ENCODE measurements at regions of chr6 and their contacts with region 1.

Region 1: DNA sequence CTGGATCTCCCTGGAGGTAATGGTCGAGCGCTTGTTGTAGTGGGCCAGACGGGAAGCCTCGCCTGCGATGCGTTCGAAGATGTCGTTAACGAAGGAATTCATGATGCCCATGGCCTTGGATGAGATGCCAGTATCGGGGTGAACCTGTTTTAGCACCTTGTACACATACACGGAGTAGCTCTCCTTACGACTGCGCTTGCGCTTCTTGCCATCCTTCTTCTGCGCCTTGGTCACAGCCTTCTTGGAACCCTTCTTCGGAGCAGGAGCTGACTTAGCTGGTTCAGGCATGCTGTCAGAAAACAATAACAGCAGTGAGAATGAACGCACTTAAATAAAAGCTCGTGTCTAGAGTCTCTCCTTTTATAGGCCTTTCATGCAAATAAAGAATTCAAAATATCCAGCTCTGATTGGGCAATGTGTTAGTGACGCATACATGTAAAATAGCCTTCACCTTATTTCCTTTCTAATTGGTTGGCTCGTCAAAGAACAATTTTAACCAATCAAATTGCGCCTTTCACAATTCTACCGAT is 129.2 kb downstream of the HFE start:
- DNase-seq: peak; percentile 98
- H3K4me3 ChIP-seq: peak overlapping the region; percentile 62
- H3K27ac ChIP-seq: peak overlapping the region; percentile 92
- H3K4me1 ChIP-seq: peaks cover 3% of the 10 kb centered on the region
- H3K27me3 ChIP-seq: no peaks in the 10 kb centered on the region
- CTCF ChIP-seq: no peak

Region 2: DNA sequence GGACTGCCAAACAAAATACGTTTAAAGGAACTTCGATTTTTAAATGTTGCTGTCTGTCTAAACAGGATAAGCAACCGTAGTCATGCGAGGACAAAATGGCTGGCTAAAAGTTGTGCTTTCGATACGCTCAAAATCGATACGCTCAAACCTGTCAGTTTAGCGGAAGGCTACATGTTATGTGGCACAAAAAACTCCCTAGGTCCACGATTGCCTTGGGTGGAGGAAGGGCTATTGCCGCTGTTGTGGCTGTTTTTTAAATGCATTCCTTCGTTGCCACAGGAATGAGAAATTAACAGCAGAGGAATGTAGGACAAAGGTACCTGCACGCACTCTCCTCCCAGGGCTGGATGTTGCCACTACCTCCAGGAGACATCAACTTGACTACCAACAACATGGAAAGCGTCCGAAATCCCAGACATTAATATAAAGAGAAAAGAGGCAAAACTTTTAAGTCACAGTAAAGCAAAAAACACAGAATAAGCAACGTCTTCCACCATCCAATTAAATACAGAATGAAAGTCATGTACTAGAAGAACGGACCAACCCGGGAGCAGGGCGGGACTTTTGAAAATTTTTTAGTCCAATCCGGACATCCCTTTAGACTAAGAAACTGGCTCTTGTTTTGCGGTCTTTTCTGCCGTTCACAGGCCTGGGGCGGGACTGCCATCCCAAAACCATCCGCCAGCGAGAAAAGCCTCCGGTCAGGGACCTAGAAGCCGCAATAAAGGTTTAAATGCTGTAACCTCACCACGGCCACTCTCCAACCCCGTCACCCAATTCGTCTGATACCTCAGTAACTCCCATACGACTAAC is 161.4 kb before region 1 on chr6:
- CTCF ChIA-PET with region 1: no interaction called
- POLR2A ChIA-PET with region 1: no interaction called
- intact Hi-C with region 1: loop called (anchors 5 kb)
- DNase-seq: peak; percentile 96
- H3K4me3 ChIP-seq: peak overlapping the region; percentile 78
- H3K27ac ChIP-seq: peak overlapping the region; percentile 96
- H3K4me1 ChIP-seq: peaks cover 20% of the 10 kb centered on the region
- H3K27me3 ChIP-seq: no peaks in the 10 kb centered on the region
- CTCF ChIP-seq: no peak

Region 3: GRCh38 chr6:26115226-26115625 is 101.2 kb before region 1 on chr6:
- CTCF ChIA-PET with region 1: no interaction called
- POLR2A ChIA-PET with region 1: no interaction called
- intact Hi-C with region 1: no loop called
- DNase-seq: no peak
- H3K4me3 ChIP-seq: no peak overlapping the region
- H3K27ac ChIP-seq: peak overlapping the region; percentile 17
- H3K4me1 ChIP-seq: peaks cover 12% of the 10 kb centered on the region
- H3K27me3 ChIP-seq: no peaks in the 10 kb centered on the region
- CTCF ChIP-seq: no peak

Region 4: DNA sequence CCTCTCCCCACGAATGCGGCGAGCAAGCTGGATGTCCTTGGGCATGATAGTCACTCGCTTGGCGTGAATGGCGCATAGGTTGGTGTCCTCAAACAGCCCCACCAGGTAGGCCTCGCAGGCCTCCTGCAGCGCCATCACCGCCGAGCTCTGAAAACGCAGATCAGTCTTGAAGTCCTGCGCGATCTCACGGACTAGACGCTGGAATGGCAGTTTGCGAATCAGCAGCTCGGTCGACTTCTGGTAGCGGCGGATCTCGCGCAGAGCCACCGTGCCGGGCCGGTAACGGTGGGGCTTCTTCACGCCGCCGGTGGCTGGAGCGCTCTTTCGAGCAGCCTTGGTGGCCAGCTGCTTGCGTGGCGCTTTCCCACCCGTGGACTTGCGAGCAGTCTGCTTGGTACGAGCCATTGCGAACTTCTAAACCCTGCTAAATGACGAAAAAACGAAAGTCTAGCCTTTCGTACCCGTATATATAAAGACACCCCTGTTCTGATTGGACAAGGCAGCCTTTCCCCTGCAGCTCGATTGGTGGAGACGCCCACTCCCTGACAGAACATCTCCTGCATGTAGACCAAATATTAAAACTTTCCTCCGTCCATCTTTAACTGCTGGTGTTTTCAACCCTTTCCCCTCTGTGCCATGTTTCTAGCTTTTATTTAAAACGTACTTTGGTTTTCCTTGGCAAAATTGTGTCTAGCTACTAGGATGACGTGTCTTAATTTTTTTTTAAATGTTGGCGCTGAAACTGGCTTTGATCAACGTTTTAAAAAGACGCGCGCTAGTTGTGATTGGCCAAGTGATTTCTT is 19.4 kb before region 1 on chr6:
- CTCF ChIA-PET with region 1: interaction called, 9 read pairs
- POLR2A ChIA-PET with region 1: interaction called, 85 read pairs
- intact Hi-C with region 1: no loop called
- DNase-seq: peak; percentile 96
- H3K4me3 ChIP-seq: peak overlapping the region; percentile 63
- H3K27ac ChIP-seq: peak overlapping the region; percentile 87
- H3K4me1 ChIP-seq: no peaks in the 10 kb centered on the region
- H3K27me3 ChIP-seq: no peaks in the 10 kb centered on the region
- CTCF ChIP-seq: no peak

Region 5: GRCh38 chr6:26234421-26235296 is 18.2 kb after region 1 on chr6:
- CTCF ChIA-PET with region 1: no interaction called
- POLR2A ChIA-PET with region 1: interaction called, 15 read pairs
- intact Hi-C with region 1: no loop called
- DNase-seq: peak; percentile 93
- H3K4me3 ChIP-seq: peak overlapping the region; percentile 54
- H3K27ac ChIP-seq: peak overlapping the region; percentile 90
- H3K4me1 ChIP-seq: peaks cover 24% of the 10 kb centered on the region
- H3K27me3 ChIP-seq: no peaks in the 10 kb centered on the region
- CTCF ChIP-seq: no peak

Region 6: DNA sequence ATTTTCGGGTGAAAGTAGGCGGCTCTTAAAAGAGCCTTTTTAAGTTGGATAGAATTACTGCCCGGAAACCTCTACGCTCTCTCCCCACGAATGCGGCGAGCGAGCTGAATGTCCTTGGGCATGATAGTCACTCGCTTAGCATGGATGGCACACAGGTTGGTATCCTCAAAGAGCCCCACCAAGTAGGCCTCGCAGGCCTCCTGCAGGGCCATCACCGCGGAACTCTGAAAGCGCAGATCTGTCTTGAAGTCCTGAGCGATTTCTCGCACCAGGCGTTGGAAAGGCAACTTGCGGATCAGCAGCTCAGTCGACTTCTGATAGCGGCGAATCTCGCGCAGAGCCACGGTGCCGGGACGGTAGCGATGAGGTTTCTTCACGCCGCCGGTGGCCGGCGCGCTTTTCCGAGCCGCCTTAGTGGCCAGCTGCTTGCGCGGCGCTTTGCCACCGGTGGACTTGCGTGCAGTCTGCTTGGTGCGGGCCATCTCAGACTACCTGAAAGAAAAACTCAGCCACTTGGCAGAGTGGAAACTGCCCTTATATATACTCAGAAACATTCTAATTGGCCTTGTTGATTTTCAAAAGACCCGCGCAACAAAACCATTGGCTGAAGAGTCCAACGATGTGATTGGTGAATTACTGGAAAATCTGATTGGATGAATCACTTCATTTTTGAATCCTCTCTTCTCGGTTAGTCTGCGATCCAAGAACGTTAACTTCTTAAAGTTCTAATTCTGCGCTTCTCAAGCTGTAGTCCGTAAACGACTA is 54.7 kb after region 1 on chr6:
- CTCF ChIA-PET with region 1: no interaction called
- POLR2A ChIA-PET with region 1: interaction called, 8 read pairs
- intact Hi-C with region 1: loop called (anchors 5 kb)
- DNase-seq: peak; percentile 97
- H3K4me3 ChIP-seq: peak overlapping the region; percentile 66
- H3K27ac ChIP-seq: peak overlapping the region; percentile 94
- H3K4me1 ChIP-seq: peaks cover 16% of the 10 kb centered on the region
- H3K27me3 ChIP-seq: no peaks in the 10 kb centered on the region
- CTCF ChIP-seq: no peak

Region 7: DNA sequence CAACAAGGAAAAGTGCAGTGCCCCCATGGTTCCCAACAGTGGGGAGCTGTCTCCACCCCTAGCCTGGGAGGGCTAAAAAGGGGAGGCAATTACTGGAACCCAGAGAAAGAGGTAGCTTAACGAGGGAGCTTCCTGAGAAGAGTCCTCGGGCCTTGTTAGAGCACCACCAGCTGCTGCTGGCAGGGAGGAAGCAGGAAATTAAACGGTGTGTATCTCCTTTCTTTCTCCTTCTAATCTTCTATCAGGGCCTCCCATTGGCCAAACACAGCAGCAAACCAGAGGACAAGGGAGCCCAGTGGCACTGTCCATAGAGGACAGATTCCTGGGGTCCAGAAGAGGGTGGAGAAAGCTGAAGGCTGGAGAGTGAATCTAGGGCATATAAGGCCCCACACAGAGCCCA is 158.8 kb after region 1 on chr6:
- CTCF ChIA-PET with region 1: no interaction called
- POLR2A ChIA-PET with region 1: no interaction called
- intact Hi-C with region 1: no loop called
- DNase-seq: peak; percentile 18
- H3K4me3 ChIP-seq: no peak overlapping the region
- H3K27ac ChIP-seq: no peak overlapping the region
- H3K4me1 ChIP-seq: no peaks in the 10 kb centered on the region
- H3K27me3 ChIP-seq: no peaks in the 10 kb centered on the region
- CTCF ChIP-seq: no peak